ENCODE measurements at regions of chr7 and their contacts with region 1.

Region 1: GRCh38 chr7:102891693-102892261 is 21.0 kb upstream of the LRRC17 start:
- DNase-seq: peak in 8 of 10 donors; percentile 18 to 81 (median 58)
- H3K4me3 ChIP-seq: no peak overlapping the region
- H3K27ac ChIP-seq: peak overlapping the region in 35 of 59 donors; percentile 0 to 80 (median 46)
- H3K27me3 ChIP-seq: no peaks in the 10 kb centered on the region
- CTCF ChIP-seq: no peak

Region 2: DNA sequence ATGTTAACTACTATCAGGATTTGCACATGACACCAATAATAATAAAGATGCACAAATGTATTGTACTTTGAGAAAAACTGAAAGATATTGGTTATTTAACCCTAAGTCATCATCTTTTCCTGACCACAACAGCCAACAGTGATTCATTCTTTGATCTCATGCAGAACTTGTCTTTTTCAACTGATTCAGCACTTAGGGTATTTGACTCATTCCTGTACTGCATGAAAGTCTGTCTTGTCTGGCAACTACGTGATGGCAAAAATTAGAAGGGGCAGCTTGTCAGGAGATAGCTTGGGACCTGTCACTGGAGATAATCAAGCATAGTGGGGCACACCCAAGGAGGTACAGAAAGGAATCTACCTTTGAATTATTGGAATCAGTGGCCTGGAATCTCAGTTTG is 56.8 kb before region 1 on chr7:
- intact Hi-C with region 1: no loop called
- DNase-seq: no peak
- H3K4me3 ChIP-seq: no peak overlapping the region
- H3K27ac ChIP-seq: no peak overlapping the region
- H3K27me3 ChIP-seq: no peaks in the 10 kb centered on the region
- CTCF ChIP-seq: no peak

Region 3: GRCh38 chr7:102991540-102992214 is 99.9 kb after region 1 on chr7:
- intact Hi-C with region 1: loop called in 1 of 2 experiments (anchors 2 kb)
- DNase-seq: peak in 1 of 10 donors; percentile 19
- H3K4me3 ChIP-seq: no peak overlapping the region
- H3K27ac ChIP-seq: peak overlapping the region in 52 of 59 donors; percentile 0 to 81 (median 60)
- H3K27me3 ChIP-seq: no peaks in the 10 kb centered on the region
- CTCF ChIP-seq: no peak

Measured in dorsolateral prefrontal cortex (tissue), 120 donors.